ENCODE measurements at regions of chr20 and their contacts with region 1.

Region 1: GRCh38 chr20:18507218-18508021 is at the start of gene SEC23B:
- DNase-seq: peak; percentile 94 to 95
- H3K4me3 ChIP-seq: peak within 1 kb of the TSS; percentile 73 to 88 (median 80)
- H3K27ac ChIP-seq: peak within 1 kb of the TSS; percentile 98
- H3K4me1 ChIP-seq: peaks cover 0 to 6% (median 2%) of the 10 kb centered on the region in 4 experiments; a peak in 4 of 7 replicates
- H3K27me3 ChIP-seq: no peaks in the 10 kb centered on the region
- CTCF ChIP-seq: no peak
- EP300 ChIP-seq: no peak
- POLR2A ChIP-seq: peak; percentile 65 to 76
- RAD21 ChIP-seq: no peak
- total RNA-seq, gene SEC23B: 61.2 and 62.8 TPM in 2 replicates

Region 2: GRCh38 chr20:18287915-18288748 is 219.3 kb before region 1 on chr20 and contains the start of gene ZNF133:
- CTCF ChIA-PET with region 1: no interaction called
- POLR2A ChIA-PET with region 1: interaction called, 10 read pairs
- DNase-seq: peak; percentile 85 to 99
- H3K4me3 ChIP-seq: peak within 1 kb of the TSS; percentile 84 to 93 (median 92)
- H3K27ac ChIP-seq: peak within 1 kb of the TSS; percentile 87
- H3K4me1 ChIP-seq: peaks cover 0 to 6% (median 2%) of the 10 kb centered on the region in 4 experiments; a peak in 1 of 7 replicates
- H3K27me3 ChIP-seq: no peaks in the 10 kb centered on the region
- CTCF ChIP-seq: peak in 1 of 3 experiments; percentile 4; a peak in 2 of 4 replicates
- EP300 ChIP-seq: no peak
- POLR2A ChIP-seq: peak; percentile 88 to 95
- RAD21 ChIP-seq: peak; percentile 11 to 14; a peak in 1 of 4 replicates
- total RNA-seq, gene ZNF133: 12.1 and 14.3 TPM in 2 replicates

Region 3: DNA sequence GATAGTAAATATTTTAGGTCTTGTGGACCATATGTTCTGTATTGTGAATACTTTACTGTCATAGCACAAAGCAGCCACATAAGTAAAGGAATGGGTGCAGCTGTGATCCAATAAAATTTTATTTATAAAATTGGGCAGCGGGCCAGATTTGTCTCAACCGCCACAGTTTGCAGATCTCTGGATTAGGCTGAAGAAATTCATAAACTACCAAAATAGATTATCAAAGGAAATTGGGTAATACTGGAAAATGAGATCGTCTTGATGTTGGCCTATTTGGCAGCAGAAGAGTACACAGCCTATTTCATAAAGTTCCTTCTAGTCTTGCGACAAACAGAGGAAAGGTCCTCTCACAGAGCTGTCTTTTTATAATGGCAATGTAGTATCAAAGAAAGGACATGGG is 110.4 kb before region 1 on chr20:
- CTCF ChIA-PET with region 1: no interaction called
- POLR2A ChIA-PET with region 1: no interaction called
- DNase-seq: no peak
- H3K4me3 ChIP-seq: no peak overlapping the region
- H3K27ac ChIP-seq: no peak overlapping the region
- H3K4me1 ChIP-seq: peaks cover 0 to 6% (median 4%) of the 10 kb centered on the region in 4 experiments; a peak in 3 of 7 replicates
- H3K27me3 ChIP-seq: no peaks in the 10 kb centered on the region
- CTCF ChIP-seq: no peak
- EP300 ChIP-seq: no peak
- POLR2A ChIP-seq: no peak
- RAD21 ChIP-seq: no peak

Region 4: GRCh38 chr20:18466894-18467730 is 40.3 kb before region 1 on chr20 and contains the starts of genes DZANK1 and POLR3F:
- CTCF ChIA-PET with region 1: no interaction called
- POLR2A ChIA-PET with region 1: interaction called, 14 read pairs
- DNase-seq: peak; percentile 89 to 99
- H3K4me3 ChIP-seq: peak within 1 kb of the TSS; percentile 73 to 97 (median 91)
- H3K27ac ChIP-seq: peak within 1 kb of the TSS; percentile 91
- H3K4me1 ChIP-seq: no peaks in the 10 kb centered on the region; a peak in 2 of 7 replicates
- H3K27me3 ChIP-seq: no peaks in the 10 kb centered on the region
- CTCF ChIP-seq: no peak
- EP300 ChIP-seq: 0 out of 3 replicates have a peak, but pooled peaks of 1 of the 2 experiments have one; percentile 9
- POLR2A ChIP-seq: peak; percentile 73 to 82
- RAD21 ChIP-seq: 0 out of 4 replicates have a peak, but pooled peaks of 1 of the 2 experiments have one; percentile 4
- total RNA-seq, gene DZANK1: 9.7 and 9.9 TPM in 2 replicates
- total RNA-seq, gene POLR3F: 12.6 and 14.0 TPM in 2 replicates

Region 5: DNA sequence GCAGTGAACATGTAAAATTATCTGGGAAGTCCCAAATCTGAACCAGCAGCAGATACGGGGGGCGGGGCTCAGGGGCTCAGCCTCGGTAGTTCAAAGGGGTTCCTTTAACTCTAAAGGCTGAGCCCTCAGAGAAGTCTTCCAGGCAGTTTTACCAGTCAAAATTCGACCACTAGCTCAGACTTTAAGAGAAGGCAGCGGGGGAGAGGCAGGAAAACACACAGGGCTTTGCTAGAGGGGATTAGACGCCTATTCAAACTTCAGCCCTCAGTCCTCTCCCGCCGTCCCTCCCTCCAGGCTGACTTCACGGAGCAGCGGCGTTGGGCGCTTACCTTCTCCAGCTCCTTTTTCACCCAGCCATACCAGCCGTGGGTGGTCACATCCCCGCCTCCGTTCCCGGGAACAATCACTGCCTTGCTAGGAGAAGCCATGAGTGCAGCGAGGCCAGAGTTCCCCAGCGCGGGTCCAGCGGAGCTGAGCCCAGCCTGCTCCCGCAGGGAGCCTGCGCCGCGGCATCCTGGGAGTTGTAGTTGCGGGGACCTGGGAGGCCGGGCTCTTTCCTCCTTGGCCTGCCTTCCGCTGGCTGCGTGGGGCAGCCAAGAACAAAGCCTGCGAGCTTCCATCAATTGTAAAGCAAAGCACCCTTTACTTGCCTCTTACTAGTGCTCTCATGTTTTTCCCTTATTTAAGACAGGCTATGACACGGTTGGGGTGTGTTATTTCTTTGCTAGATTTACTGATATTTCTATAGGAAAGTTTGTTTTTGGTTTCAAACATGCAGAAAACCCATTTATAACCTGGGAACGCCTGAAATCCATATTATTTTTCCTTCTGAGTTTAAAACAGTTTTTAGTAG is 10.5 kb before region 1 on chr20 and contains the start of gene RBBP9:
- CTCF ChIA-PET with region 1: interaction called, 5 read pairs
- POLR2A ChIA-PET with region 1: interaction called, 55 read pairs
- DNase-seq: peak; percentile 71 to 90
- H3K4me3 ChIP-seq: peak within 1 kb of the TSS; percentile 78 to 98 (median 94)
- H3K27ac ChIP-seq: peak within 1 kb of the TSS; percentile 46
- H3K4me1 ChIP-seq: peaks cover 0 to 3% (median 0%) of the 10 kb centered on the region in 4 experiments; a peak in 1 of 7 replicates
- H3K27me3 ChIP-seq: no peaks in the 10 kb centered on the region
- CTCF ChIP-seq: no peak
- EP300 ChIP-seq: no peak
- POLR2A ChIP-seq: peak; percentile 75 to 84
- RAD21 ChIP-seq: no peak
- total RNA-seq, gene RBBP9: 13.5 and 15.1 TPM in 2 replicates

Region 6: GRCh38 chr20:18541741-18542140 is 34.3 kb after region 1 on chr20:
- CTCF ChIA-PET with region 1: no interaction called
- POLR2A ChIA-PET with region 1: no interaction called
- DNase-seq: no peak
- H3K4me3 ChIP-seq: no peak overlapping the region
- H3K27ac ChIP-seq: no peak overlapping the region
- H3K4me1 ChIP-seq: no peaks in the 10 kb centered on the region
- H3K27me3 ChIP-seq: no peaks in the 10 kb centered on the region
- CTCF ChIP-seq: no peak
- EP300 ChIP-seq: no peak
- POLR2A ChIP-seq: no peak
- RAD21 ChIP-seq: no peak

Region 7: GRCh38 chr20:18632196-18633009 is 125.0 kb after region 1 on chr20:
- CTCF ChIA-PET with region 1: no interaction called
- POLR2A ChIA-PET with region 1: no interaction called
- DNase-seq: peak; percentile 50 to 80
- H3K4me3 ChIP-seq: no peak overlapping the region
- H3K27ac ChIP-seq: no peak overlapping the region
- H3K4me1 ChIP-seq: no peaks in the 10 kb centered on the region; a peak in 1 of 7 replicates
- H3K27me3 ChIP-seq: no peaks in the 10 kb centered on the region
- CTCF ChIP-seq: peak; percentile 95 to 99 (median 97)
- EP300 ChIP-seq: peak in 1 of 2 experiments; percentile 22; a peak in 1 of 3 replicates
- POLR2A ChIP-seq: no peak
- RAD21 ChIP-seq: peak; percentile 99

Measured in H1 (cell line).